AG04450 (cell line): ENCODE measurements at regions of chr2 and their contacts with region 1.

Region 1: DNA sequence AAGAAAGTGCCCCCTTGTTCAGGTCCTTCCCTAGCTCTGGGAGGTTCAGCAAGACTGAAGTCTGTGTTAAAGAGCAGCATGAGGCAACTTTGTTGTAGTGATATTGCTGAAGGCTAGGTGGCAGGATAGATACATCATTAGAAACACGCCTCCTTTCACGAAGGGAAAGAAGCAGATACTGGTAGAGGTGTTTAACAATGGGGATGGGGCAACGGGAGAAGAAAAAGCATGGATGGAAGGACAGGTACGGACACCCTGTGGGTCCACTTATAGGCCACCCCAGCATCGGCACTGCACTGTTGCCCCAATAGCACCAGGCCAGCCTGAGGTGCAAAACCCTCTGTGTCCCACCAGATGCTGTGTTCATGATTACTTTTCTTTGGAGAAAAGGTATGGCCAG is 3.5 kb upstream of the IGFBP5 start:
- DNase-seq: no peak
- H3K4me3 ChIP-seq: no peak overlapping the region
- H3K27ac ChIP-seq: no peak overlapping the region
- H3K27me3 ChIP-seq: no peaks in the 10 kb centered on the region
- CTCF ChIP-seq: peak; percentile 78

Region 2: DNA sequence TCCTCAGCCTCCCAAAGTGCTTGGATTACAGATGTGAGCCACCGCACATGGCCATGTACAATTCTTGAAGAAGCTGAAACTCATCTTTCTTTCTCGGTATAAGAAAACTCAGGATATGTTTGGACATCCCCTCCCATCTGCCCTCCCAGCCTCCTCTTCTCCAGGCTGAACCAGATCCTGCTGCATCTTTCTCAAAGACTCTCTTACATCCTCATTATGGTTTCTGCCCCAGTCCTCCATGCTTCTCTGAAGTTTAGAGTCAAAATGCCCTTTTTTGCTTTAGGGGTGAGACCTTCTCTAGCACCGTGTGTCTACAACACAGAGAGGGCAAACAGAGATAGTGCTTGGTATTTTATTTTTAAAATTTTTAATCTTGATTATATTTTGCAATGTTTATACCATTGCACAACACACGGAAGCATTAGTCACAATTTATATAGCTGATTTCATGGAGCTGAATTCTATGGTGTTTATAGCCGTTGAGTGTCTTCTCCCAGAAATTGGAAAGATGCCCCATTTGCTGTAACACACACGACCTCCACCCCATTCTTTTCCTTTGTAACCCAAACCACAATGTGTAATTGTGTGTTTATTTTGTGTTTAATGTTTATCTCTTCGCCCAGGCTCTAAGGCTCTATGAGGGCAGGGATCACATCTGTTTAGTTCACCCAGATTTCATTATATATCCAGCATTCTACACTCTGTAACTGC is 367.0 kb after region 1 on chr2:
- CTCF ChIA-PET with region 1: interaction called, 8 read pairs
- POLR2A ChIA-PET with region 1: interaction called, 20 read pairs
- DNase-seq: peak; percentile 97
- H3K4me3 ChIP-seq: no peak overlapping the region
- H3K27ac ChIP-seq: peak overlapping the region; percentile 12
- H3K27me3 ChIP-seq: no peaks in the 10 kb centered on the region
- CTCF ChIP-seq: no peak

Region 3: DNA sequence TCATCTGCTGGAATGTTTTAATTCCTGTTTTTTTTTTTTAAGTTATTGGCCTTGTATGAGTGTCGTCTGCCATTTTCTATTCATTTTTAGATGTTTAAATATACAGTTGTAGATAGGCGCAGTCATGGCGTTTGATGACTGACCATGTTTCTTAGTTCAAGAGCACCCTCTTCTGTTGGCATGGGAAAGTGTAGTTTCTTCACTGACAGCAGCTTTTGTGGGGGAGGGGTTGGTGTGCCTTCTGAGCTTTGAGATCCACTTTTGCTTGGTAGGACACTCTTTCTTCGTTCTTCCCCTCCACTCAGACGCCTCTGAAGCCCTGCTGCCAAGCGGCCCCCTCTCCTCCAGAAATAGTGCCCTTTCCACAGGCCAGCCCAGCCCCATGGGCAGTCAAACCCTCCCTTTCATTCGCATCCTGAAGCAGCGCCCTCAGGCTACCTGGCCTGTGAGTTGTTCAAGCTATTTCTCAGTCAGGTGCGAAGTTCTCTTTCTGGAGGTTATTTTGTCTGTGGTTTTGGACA is 811.9 kb after region 1 on chr2:
- CTCF ChIA-PET with region 1: interaction called, 34 read pairs
- POLR2A ChIA-PET with region 1: interaction called, 7 read pairs
- DNase-seq: peak; percentile 87
- H3K4me3 ChIP-seq: no peak overlapping the region
- H3K27ac ChIP-seq: no peak overlapping the region
- H3K27me3 ChIP-seq: no peaks in the 10 kb centered on the region
- CTCF ChIP-seq: peak; percentile 73

Region 4: GRCh38 chr2:217527590-217528202 is 828.8 kb after region 1 on chr2:
- CTCF ChIA-PET with region 1: interaction called, 12 read pairs
- POLR2A ChIA-PET with region 1: no interaction called
- DNase-seq: no peak
- H3K4me3 ChIP-seq: no peak overlapping the region
- H3K27ac ChIP-seq: no peak overlapping the region
- H3K27me3 ChIP-seq: peaks cover 13% of the 10 kb centered on the region
- CTCF ChIP-seq: 0 out of 2 replicates have a peak, but pooled peaks have one; percentile 7

Region 5: DNA sequence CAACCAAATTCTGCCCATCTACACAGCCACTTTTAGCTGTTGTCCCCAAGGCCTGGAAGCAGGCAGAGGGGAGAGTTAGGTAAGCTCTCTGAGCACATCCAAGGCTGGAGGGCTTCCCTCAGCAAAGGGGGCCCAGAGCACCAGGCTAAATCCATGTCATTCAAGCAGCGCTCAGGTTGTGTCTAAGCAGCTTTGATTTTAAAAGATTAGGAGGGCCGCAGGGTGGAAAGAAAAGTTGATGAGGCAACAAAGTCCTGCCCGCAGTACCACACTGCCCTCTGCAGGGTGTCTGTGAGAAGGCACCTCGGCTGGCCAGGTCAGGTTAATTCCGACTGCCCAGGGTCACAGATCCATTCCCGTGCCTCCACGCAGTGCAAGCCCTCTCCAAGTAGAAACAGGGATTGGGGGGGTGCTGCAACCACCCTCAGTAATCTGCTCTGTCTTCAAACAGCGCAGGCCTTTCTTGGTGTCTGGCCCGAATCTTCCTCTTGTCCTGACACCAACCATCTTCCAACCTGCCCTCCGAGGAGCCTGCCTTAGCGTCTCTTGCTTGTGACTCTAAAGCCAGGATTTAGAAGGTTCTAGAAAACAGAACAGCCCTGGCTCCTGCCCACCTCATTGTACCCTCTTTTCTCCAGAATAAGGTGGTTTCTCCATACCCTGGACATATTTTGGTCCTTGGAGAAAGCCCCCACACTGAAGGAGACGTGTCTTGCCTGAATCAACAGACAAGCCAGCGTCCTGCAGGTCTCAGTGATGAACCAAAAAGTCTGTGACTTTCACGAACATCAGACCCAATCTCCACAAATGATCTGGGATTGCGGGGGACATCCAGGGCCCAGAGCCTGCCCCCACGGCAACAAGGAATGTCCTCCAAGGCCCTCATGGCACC is 1014.7 kb after region 1 on chr2:
- CTCF ChIA-PET with region 1: interaction called, 13 read pairs
- POLR2A ChIA-PET with region 1: interaction called, 9 read pairs
- DNase-seq: peak; percentile 54
- H3K4me3 ChIP-seq: no peak overlapping the region
- H3K27ac ChIP-seq: peak overlapping the region; percentile 31
- H3K27me3 ChIP-seq: no peaks in the 10 kb centered on the region
- CTCF ChIP-seq: peak; percentile 97